ENCODE measurements at regions of chr6 and their contacts with region 1.

Region 1: GRCh38 chr6:13049663-13050254 is 278.6 kb downstream of the TBC1D7 start:
- DNase-seq: no peak
- H3K4me3 ChIP-seq: no peak overlapping the region
- H3K27ac ChIP-seq: no peak overlapping the region
- H3K4me1 ChIP-seq: no peaks in the 10 kb centered on the region
- H3K27me3 ChIP-seq: no peaks in the 10 kb centered on the region
- CTCF ChIP-seq: no peak
- EP300 ChIP-seq: no peak
- POLR2A ChIP-seq: no peak

Region 2: GRCh38 chr6:12071064-12071615 is 978.6 kb before region 1 on chr6:
- in situ Hi-C with region 1: no loop called
- intact Hi-C with region 1: loop called (anchors 5 kb)
- DNase-seq: no peak
- H3K4me3 ChIP-seq: no peak overlapping the region
- H3K27ac ChIP-seq: no peak overlapping the region
- H3K4me1 ChIP-seq: peaks cover 0 to 7% (median 3%) of the 10 kb centered on the region in 4 donors
- H3K27me3 ChIP-seq: no peaks in the 10 kb centered on the region
- CTCF ChIP-seq: no peak
- EP300 ChIP-seq: no peak
- POLR2A ChIP-seq: no peak

Region 3: GRCh38 chr6:13259393-13259792 is 209.6 kb after region 1 on chr6:
- in situ Hi-C with region 1: no loop called
- intact Hi-C with region 1: no loop called
- DNase-seq: no peak
- H3K4me3 ChIP-seq: no peak overlapping the region
- H3K27ac ChIP-seq: no peak overlapping the region
- H3K4me1 ChIP-seq: peaks cover 0 to 7% (median 0%) of the 10 kb centered on the region in 4 donors
- H3K27me3 ChIP-seq: no peaks in the 10 kb centered on the region
- CTCF ChIP-seq: no peak
- EP300 ChIP-seq: no peak
- POLR2A ChIP-seq: no peak